ENCODE measurements at regions of chr17 and their contacts with region 1.

Region 1: GRCh38 chr17:33299115-33299514 is 6.0 kb upstream of the ASIC2 start:
- DNase-seq: no peak

Region 2: DNA sequence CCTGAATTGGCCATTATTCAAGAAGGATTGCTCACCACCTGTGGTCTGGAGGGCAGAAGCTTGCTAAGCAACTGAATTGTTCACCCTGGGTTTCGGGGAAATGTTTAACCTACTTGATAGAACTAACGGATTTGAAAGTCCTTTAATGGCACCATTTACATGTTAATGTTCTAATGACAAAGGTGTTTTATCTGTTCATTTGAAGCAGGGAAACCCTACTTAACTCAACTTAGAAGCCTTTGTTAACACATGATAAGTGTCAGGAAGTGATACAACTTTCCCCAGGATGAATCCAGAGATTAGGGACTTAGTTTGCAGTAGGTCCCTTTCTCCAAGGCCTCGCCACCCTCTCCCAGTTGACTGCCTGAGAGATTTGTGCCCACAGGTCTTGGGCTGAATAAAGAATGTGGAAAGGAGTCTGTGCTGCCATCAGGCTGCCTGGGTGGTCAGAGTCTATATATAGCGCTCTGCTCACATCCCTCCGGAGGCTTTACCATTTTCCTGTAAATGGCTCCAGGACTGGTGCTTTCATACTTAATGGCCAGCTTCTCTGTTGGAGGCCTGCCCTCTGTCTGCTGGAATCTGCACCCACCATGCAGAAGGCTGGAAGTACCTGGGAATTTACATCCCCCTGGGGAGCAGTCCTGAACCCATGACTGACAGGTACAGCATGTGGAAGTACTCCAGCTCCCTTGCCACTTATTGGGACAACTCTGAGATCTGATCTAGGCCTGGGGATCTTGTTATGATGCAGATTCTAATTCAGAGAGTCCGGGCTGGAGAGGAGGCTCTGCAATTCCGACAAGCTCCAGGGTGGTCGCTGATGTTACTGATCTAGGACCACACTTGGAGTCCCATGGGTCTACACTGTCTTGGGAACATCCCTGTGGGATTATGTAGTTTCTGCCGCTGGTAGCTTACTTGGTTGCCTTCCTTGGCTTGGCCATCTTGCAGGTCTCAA is 105.9 kb before region 1 on chr17:
- intact Hi-C with region 1: no loop called
- DNase-seq: no peak

Region 3: DNA sequence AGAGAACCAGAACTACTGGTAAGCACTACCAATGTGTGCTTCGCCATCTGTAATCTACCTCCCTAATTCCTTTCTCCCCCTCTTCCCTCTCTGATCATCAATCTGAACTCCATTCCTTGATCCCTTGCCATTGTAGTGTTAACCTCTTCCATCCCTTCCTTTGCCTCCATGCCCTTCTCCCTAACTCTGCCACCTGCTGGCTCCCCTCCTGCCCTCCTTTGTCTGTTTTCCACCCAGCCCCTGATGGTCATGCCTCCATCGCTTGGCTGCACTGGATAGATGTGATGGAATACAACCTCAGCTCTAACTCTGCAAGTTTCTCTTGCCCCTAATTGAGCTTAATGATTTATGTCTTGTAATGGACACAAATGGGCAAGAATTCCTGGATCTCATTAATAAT is 102.1 kb after region 1 on chr17:
- intact Hi-C with region 1: no loop called
- DNase-seq: no peak

Region 4: GRCh38 chr17:33779225-33779591 is 480.1 kb after region 1 on chr17:
- intact Hi-C with region 1: loop called in 1 of 2 experiments (anchors 5 kb)
- DNase-seq: no peak

Measured in posterior vena cava (tissue), 2 donors.